ENCODE measurements at regions of chr1 and their contacts with region 1.

Region 1: DNA sequence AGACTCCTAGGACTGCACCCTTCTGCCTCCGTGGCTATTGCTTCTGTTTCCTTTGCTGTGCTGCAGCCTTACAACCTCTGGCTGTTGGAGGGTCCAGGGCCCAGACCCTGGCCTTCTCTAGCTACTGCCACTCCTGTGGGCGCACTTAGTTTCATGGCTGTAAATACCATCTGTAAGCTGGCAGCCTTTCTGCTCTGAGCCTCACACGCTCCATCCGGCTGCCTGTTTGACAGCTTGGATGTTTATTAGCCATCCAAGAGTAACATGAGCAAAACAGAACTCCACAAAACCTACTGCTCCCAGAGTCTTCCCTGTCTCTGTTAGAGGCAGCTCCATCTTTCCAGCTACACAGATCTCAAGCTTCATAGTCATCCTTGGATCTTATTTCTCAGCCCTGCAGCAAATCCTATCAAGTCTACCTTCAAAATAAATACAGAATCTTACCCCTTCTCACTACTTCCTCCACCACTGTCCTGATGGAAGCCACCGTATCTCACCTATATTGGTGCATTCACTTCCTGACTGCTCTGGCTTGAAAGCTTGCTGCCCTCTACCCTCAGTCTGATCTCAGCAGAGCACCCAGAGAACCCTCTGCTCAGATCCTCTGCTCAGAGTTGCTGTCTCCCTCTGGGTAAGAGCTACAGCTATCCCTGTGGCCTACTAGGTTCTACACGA is 19.1 kb downstream of the SLC25A33 start:
- DNase-seq: peak; percentile 16
- H3K4me3 Mint-ChIP-seq: no peak overlapping the region
- H3K27ac Mint-ChIP-seq: peak overlapping the region; percentile 61
- H3K4me1 Mint-ChIP-seq: peaks cover 33% of the 10 kb centered on the region
- H3K27me3 Mint-ChIP-seq: no peaks in the 10 kb centered on the region

Region 2: GRCh38 chr1:9593492-9594465 is 35.4 kb after region 1 on chr1:
- CTCF ChIA-PET with region 1: no interaction called
- POLR2A ChIA-PET with region 1: no interaction called
- DNase-seq: peak; percentile 62
- H3K4me3 Mint-ChIP-seq: no peak overlapping the region
- H3K27ac Mint-ChIP-seq: peak overlapping the region; percentile 57
- H3K4me1 Mint-ChIP-seq: peaks cover 33% of the 10 kb centered on the region
- H3K27me3 Mint-ChIP-seq: no peaks in the 10 kb centered on the region

Region 3: DNA sequence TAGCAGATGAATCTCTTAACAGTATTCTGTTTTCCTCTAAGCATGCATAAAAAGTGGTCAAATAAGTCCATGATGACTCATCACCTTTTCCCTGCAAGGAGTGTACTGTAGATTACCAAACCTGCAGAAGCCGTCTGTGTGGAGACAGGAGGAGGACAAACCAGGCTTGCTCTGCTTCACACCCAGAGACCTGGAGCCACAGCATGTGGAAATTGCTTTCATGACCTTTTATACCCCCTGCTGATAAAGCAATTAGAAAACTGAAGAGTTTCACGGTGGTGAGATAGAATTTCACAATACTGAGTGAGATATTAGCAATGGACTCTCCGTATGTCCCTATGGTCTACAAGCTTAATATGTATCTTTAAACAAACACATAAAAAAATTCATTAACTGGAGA is 900.8 kb after region 1 on chr1:
- CTCF ChIA-PET with region 1: no interaction called
- POLR2A ChIA-PET with region 1: interaction called, 21 read pairs
- DNase-seq: no peak
- H3K4me3 Mint-ChIP-seq: no peak overlapping the region
- H3K27ac Mint-ChIP-seq: no peak overlapping the region
- H3K4me1 Mint-ChIP-seq: peaks cover 27% of the 10 kb centered on the region
- H3K27me3 Mint-ChIP-seq: no peaks in the 10 kb centered on the region